ENCODE measurements at regions of chr10 and their contacts with region 1.

Region 1: DNA sequence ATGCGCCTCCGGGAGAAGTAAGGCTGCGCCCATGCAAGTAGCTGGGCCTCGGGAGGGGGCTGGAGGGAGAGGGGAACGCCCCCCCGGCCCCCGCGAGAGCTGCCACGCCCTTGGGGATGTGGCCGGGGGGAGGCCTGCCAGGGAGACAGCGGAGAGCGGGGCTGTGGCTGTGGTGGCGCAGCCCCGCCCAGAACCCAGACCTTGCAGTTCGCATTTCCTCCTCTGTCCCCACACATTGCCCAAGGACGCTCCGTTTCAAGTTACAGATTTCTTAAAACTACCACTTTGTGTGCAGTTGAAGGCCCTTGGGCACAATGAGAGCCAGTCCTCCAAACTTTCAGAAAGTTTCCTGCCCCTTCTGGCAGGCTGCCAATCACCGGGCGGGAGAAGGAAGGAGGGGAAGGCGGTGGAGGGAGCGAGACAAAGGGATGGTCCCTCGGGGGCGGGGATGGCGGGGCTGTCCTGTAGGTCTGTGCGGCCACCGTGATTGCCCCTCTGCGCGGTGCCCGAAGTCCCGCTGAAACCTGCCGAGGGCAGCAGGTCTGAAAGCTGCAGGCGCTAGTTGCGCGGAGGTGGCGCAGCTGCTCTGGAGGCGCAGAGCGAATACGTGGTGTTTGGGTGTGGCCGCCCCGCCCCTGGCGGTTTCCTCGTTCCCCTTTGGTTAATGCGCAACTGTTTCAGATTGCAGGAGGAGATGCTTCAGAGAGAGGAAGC is 2.1 kb downstream of the VIM start:
- DNase-seq: peak; percentile 92
- H3K4me3 ChIP-seq: peak overlapping the region; percentile 77
- H3K27ac ChIP-seq: peak overlapping the region; percentile 57
- H3K4me1 ChIP-seq: peaks cover 29% of the 10 kb centered on the region
- CTCF ChIP-seq: no peak

Region 2: DNA sequence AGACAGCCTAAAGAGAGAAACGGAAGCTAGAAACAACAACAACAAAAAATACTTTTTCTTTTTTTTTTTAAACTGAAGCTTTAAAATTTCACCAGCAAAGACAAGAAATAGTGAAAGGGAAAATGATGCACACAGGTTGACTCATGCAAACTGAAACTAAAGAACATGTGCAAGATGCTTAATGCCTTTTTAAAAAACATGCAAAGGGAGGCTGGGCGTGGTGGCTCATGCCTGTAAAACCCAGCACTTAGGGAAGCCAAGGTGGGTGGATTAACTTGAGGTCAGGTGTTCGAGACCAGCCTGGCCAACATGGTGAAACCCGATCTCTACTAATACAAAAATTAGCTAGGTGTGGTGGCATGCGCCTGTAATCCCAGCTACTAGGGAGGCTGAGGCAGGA is 85.4 kb before region 1 on chr10:
- CTCF ChIA-PET with region 1: no interaction called
- POLR2A ChIA-PET with region 1: no interaction called
- intact Hi-C with region 1: no loop called
- DNase-seq: no peak
- H3K4me3 ChIP-seq: no peak overlapping the region
- H3K27ac ChIP-seq: no peak overlapping the region
- H3K4me1 ChIP-seq: no peaks in the 10 kb centered on the region
- CTCF ChIP-seq: no peak

Region 3: DNA sequence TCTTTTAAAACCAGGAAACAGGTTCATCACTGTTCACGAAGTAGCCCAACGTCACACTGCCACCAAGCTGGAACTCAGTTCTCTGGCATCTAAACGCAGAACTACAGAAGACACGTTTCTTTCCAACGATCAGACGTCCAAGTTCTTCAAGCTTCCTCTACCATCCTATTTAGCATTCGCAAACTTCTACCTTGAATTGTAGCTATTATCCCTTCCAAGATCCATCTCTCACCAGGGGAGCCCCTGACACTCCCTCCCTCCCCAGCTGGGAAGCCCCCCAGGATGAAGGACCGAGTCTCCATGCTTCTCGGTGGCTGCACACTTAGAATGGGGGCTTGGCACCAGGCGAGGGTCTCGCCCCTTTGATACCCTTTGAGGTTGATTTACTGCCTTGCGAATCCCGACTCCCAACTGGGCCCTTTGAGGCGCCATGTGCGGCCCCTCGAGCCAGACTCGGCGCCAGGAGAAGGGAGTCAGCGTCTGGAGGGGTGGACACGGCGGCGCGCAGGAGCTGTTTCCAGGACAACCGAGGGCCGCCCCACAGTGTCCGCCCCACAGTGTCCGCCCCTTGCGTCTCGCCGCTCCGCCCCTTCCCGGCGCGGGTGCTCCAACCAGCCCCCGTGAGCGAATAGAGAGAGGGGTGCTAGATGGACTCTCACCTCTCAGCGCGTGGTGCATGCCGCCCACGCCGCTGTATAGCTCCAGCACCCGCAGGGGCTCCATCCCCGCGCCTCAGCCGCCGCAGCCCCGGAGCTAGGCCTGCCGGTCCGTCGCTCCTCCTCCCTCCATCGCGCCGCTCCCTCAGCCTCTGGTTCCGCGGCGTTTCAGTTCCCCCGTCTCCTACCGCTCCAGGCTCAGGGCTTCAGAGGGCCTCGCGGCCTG is 29.0 kb before region 1 on chr10 and contains the start of gene TRDMT1:
- CTCF ChIA-PET with region 1: no interaction called
- POLR2A ChIA-PET with region 1: interaction called, 10 read pairs
- intact Hi-C with region 1: loop called (anchors 1 kb)
- DNase-seq: peak; percentile 81
- H3K4me3 ChIP-seq: peak within 1 kb of the TSS; percentile 94
- H3K27ac ChIP-seq: peak within 1 kb of the TSS; percentile 53
- H3K4me1 ChIP-seq: peaks cover 18% of the 10 kb centered on the region
- CTCF ChIP-seq: 0 out of 2 replicates have a peak, but pooled peaks have one; percentile 30
- total RNA-seq, gene TRDMT1: 10.4 and 12.7 TPM in 2 replicates